Activated CD4-positive, alpha-beta memory T cell treated with anti-CD3 and anti-CD28 coated beads for 36 hours (primary cell): ENCODE measurements at regions of chr17 and their contacts with region 1.

Region 1: DNA sequence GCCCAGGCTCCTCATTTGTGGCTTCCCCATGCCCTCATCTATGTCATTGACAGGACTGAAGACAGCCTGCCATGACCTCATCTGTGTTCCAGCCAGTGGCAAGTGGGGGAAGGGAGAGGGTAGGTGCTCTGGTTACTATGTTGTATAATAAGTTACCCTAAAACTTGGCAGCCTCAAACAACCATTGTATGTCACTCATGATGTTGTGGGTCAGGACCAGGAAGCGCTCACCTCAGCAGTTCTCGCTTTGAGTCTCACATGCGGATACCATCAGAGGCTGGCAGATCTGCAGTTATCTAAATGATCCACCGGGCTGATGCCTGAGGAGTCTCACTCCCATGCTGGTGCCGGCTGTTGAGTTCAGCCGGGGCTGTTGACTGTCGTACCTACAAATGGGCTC is 89.0 kb upstream of the TMEM97 start:
- DNase-seq: peak; percentile 65
- H3K4me3 Mint-ChIP-seq: no peak overlapping the region
- H3K27ac Mint-ChIP-seq: no peak overlapping the region
- H3K4me1 Mint-ChIP-seq: peaks cover 11% of the 10 kb centered on the region
- H3K27me3 Mint-ChIP-seq: peaks cover 45% of the 10 kb centered on the region

Region 2: GRCh38 chr17:28252436-28252835 is 22.4 kb after region 1 on chr17:
- CTCF ChIA-PET with region 1: interaction called, 8 read pairs
- POLR2A ChIA-PET with region 1: no interaction called
- intact Hi-C with region 1: loop called (anchors 2 kb)
- DNase-seq: no peak
- H3K4me3 Mint-ChIP-seq: no peak overlapping the region
- H3K27ac Mint-ChIP-seq: no peak overlapping the region
- H3K4me1 Mint-ChIP-seq: peaks cover 8% of the 10 kb centered on the region
- H3K27me3 Mint-ChIP-seq: peaks cover 7% of the 10 kb centered on the region